A549 (cell line): ENCODE measurements at regions of chr21 and their contacts with region 1.

Region 1: GRCh38 chr21:33360881-33361602 is 36.3 kb downstream of the IFNAR1 start:
- DNase-seq: peak; percentile 70 to 76
- ATAC-seq: peak; percentile 98 to 99
- H3K4me3 ChIP-seq: peak overlapping the region; percentile 42
- H3K27ac ChIP-seq: peak overlapping the region; percentile 74 to 80
- H3K4me1 ChIP-seq: peaks cover 13% of the 10 kb centered on the region
- CTCF ChIP-seq: peak; percentile 67
- EP300 ChIP-seq: no peak
- POLR2A ChIP-seq: no peak
- RAD21 ChIP-seq: peak in 1 of 2 experiments; percentile 54; a peak in 3 of 5 replicates

Region 2: GRCh38 chr21:33199516-33200217 is 161.4 kb before region 1 on chr21:
- CTCF ChIA-PET with region 1: interaction called, 35 read pairs
- POLR2A ChIA-PET with region 1: interaction called, 3 read pairs
- DNase-seq: peak; percentile 69 to 86
- ATAC-seq: peak; percentile 43 to 65
- H3K4me3 ChIP-seq: no peak overlapping the region
- H3K27ac ChIP-seq: peak overlapping the region; percentile 25 to 62; a peak in 4 of 6 replicates
- H3K4me1 ChIP-seq: peaks cover 36% of the 10 kb centered on the region
- CTCF ChIP-seq: peak; percentile 78
- EP300 ChIP-seq: no peak
- POLR2A ChIP-seq: no peak
- RAD21 ChIP-seq: peak; percentile 92 to 95

Region 3: DNA sequence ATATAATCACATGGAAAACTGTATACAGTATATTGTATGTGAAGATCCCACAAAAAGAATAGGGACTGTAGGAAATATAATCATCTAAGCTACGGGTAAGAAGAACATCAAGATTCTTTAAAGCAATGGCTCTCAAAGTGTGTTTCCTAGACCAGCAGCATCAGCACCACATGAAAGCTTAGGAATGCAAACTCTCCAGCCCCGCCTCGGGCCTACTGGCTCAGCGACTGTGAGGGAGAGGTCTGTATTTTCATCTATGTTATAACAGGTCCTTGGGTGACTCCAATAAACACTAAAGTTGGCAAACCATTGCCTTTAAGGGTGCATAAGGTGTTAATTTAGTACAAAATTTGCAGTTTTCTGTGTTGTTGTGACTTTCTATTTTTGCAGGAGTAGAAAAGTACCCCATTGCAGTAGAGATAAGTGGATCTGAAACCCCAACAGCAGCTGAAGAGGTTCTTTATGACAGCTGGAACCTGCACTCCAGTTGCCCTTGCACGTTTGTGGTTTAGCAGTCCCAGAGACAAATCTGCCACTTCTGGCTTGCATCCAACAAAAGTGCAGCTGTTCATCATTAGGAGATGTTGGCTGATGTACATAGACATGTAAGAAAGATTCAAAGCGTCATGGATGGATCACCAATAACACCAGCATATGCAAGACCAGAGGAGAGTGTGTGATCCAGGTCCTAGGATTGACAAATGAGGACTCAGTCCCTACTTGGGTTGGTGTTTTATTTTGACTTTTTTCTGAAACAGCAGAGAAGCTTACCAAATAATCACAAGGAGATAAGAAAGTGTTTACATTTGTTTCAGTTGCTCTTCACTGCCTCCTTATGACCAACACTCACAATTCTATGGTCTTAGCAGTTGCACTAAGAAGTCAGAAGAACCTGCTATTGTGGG is 52.2 kb before region 1 on chr21:
- CTCF ChIA-PET with region 1: no interaction called
- POLR2A ChIA-PET with region 1: no interaction called
- DNase-seq: no peak
- ATAC-seq: no peak
- H3K4me3 ChIP-seq: no peak overlapping the region
- H3K27ac ChIP-seq: no peak overlapping the region
- H3K4me1 ChIP-seq: no peaks in the 10 kb centered on the region
- CTCF ChIP-seq: no peak
- EP300 ChIP-seq: no peak
- POLR2A ChIP-seq: no peak
- RAD21 ChIP-seq: no peak

Region 4: DNA sequence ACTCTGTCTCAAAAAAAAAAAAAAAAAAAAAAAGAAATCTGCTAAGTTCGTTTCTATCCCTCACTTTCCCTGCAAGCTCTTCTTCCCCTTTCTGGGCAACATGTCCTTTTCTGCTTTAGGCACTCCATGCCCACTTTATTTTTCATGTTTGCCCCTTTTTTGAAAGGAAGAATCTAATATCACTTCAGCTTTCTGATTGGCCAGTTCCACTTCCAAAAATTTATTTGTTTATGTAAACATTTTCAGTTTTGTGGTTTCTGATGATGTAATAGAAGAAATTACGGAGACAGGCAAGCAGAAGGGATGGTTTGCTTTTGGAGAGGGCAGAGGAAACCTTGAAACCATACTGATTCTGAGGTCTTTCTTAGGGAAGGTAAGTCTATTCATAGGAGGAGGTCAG is 21.1 kb before region 1 on chr21:
- CTCF ChIA-PET with region 1: interaction called, 21 read pairs
- POLR2A ChIA-PET with region 1: no interaction called
- DNase-seq: no peak
- ATAC-seq: no peak
- H3K4me3 ChIP-seq: no peak overlapping the region
- H3K27ac ChIP-seq: no peak overlapping the region
- H3K4me1 ChIP-seq: no peaks in the 10 kb centered on the region
- CTCF ChIP-seq: no peak
- EP300 ChIP-seq: no peak
- POLR2A ChIP-seq: no peak
- RAD21 ChIP-seq: no peak

Region 5: GRCh38 chr21:33374450-33375096 is 13.5 kb after region 1 on chr21:
- CTCF ChIA-PET with region 1: interaction called, 28 read pairs
- POLR2A ChIA-PET with region 1: no interaction called
- DNase-seq: peak; percentile 33 to 71
- ATAC-seq: peak; percentile 83 to 92; a peak in 5 of 6 replicates
- H3K4me3 ChIP-seq: no peak overlapping the region
- H3K27ac ChIP-seq: peak overlapping the region; percentile 20 to 49; a peak in 4 of 6 replicates
- H3K4me1 ChIP-seq: peaks cover 17% of the 10 kb centered on the region
- CTCF ChIP-seq: peak; percentile 62
- EP300 ChIP-seq: no peak
- POLR2A ChIP-seq: no peak
- RAD21 ChIP-seq: peak; percentile 73 to 79

Region 6: GRCh38 chr21:33386222-33386784 is 25.3 kb after region 1 on chr21:
- CTCF ChIA-PET with region 1: interaction called, 25 read pairs
- POLR2A ChIA-PET with region 1: no interaction called
- DNase-seq: no peak
- ATAC-seq: peak in 1 of 2 experiments; percentile 43; a peak in 1 of 6 replicates
- H3K4me3 ChIP-seq: no peak overlapping the region
- H3K27ac ChIP-seq: no peak overlapping the region
- H3K4me1 ChIP-seq: peaks cover 16% of the 10 kb centered on the region
- CTCF ChIP-seq: no peak
- EP300 ChIP-seq: no peak
- POLR2A ChIP-seq: no peak
- RAD21 ChIP-seq: no peak

Region 7: GRCh38 chr21:33441489-33442477 is 80.7 kb after region 1 on chr21:
- CTCF ChIA-PET with region 1: interaction called, 55 read pairs
- POLR2A ChIA-PET with region 1: no interaction called
- DNase-seq: peak; percentile 20 to 87
- ATAC-seq: peak; percentile 72 to 87
- H3K4me3 ChIP-seq: no peak overlapping the region
- H3K27ac ChIP-seq: peak overlapping the region; percentile 33 to 61; a peak in 2 of 6 replicates
- H3K4me1 ChIP-seq: peaks cover 14% of the 10 kb centered on the region
- CTCF ChIP-seq: no peak
- EP300 ChIP-seq: no peak
- POLR2A ChIP-seq: no peak
- RAD21 ChIP-seq: no peak

Region 8: DNA sequence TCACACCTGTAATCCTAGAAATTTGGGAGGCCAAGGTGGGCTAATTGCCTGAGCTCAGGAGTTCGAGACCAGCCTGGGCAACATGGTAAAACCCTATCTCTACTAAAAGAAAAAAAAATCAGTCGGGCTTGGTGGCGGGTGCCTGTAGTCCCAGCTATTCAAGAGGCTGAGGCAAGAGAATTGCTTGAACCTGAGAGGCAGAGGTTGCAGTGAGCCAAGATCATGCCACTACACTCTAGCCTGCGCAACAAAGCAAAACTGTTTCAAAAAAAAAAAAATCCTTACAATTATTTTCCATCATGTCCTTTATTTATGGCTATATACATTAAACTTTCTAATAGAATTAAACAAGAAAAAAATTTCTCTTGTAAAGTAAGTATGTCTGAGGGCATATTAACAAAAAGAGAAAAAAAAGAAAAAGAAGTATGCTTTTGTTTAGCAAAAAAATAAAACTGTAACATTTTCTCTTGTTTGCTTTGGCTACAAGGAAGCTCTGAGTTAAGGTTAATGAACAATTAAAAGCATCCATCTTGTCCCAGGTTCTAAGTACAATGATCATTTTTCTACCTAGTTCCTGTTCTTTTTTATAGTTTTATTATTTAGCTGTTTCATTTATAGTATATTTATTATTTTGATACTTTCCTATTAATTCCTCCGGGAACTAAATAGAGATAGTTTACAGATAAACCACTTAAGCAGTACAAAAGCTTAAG is 100.7 kb after region 1 on chr21:
- CTCF ChIA-PET with region 1: no interaction called
- POLR2A ChIA-PET with region 1: no interaction called
- DNase-seq: no peak
- ATAC-seq: no peak
- H3K4me3 ChIP-seq: no peak overlapping the region
- H3K27ac ChIP-seq: no peak overlapping the region
- H3K4me1 ChIP-seq: no peaks in the 10 kb centered on the region
- CTCF ChIP-seq: no peak
- EP300 ChIP-seq: no peak
- POLR2A ChIP-seq: no peak
- RAD21 ChIP-seq: no peak